ENCODE measurements at regions of chr1 and their contacts with region 1.

Region 1: GRCh38 chr1:113605146-113605545 is 154.1 kb downstream of the PHTF1 start:
- DNase-seq: no peak
- H3K4me3 ChIP-seq: no peak overlapping the region
- H3K27ac ChIP-seq: no peak overlapping the region
- H3K4me1 ChIP-seq: no peaks in the 10 kb centered on the region
- H3K27me3 ChIP-seq: no peaks in the 10 kb centered on the region
- CTCF ChIP-seq: no peak

Region 2: GRCh38 chr1:113493533-113493932 is 111.6 kb before region 1 on chr1:
- intact Hi-C with region 1: no loop called
- DNase-seq: no peak
- H3K4me3 ChIP-seq: no peak overlapping the region
- H3K27ac ChIP-seq: no peak overlapping the region
- H3K4me1 ChIP-seq: no peaks in the 10 kb centered on the region
- H3K27me3 ChIP-seq: no peaks in the 10 kb centered on the region
- CTCF ChIP-seq: no peak

Region 3: GRCh38 chr1:114181350-114181749 is 576.2 kb after region 1 on chr1:
- intact Hi-C with region 1: loop called (anchors 10 kb)
- DNase-seq: no peak
- H3K4me3 ChIP-seq: no peak overlapping the region
- H3K27ac ChIP-seq: no peak overlapping the region
- H3K4me1 ChIP-seq: no peaks in the 10 kb centered on the region
- H3K27me3 ChIP-seq: no peaks in the 10 kb centered on the region
- CTCF ChIP-seq: no peak

Measured in tibial artery (tissue), 4 donors.